HepG2 (cell line): ENCODE measurements at regions of chr12 and their contacts with region 1.

Region 1: DNA sequence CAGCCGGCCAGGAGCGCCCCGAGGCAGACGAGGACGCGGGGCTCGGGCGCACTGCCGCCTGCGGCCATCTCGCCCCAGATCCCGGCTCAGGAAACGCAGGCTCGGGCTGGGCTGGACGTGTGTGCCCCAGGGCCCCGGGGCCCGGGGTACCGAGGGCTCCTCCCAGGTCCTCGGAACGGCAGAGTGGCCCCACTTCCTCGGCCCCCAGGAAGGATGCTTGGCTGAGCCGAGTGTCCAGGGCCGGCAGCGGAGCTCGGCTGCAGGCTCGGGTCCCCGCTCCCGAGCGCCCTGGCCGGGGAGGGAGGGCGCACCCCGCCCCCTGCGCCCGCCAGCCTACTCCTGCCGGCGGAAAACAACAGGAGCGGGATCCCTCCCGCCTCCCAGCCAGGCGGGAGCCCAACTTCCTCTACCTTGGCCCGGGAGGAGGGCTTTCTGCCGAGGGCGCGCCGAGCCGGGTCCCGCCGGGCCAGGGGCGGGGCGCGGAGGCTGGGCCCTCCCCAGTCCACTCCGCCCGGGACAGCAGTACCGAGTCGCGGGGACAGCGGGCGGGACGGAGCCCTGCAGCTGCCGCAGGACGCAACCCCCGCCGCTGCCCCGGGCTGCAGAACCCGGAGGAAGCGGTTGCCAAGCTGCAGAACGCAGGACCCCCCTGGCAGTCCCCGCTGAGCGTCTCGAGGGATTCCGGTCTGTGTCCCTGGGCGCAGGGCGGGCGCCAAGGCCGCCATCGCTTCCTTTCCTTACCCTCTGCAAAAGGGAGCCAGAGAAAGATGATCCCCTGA is at the start of gene VSIG10:
- DNase-seq: peak; percentile 71
- ATAC-seq: peak; percentile 91
- H3K4me3 ChIP-seq: peak within 1 kb of the TSS; percentile 82 to 91 (median 85)
- H3K27ac ChIP-seq: peak within 1 kb of the TSS; percentile 79
- H3K4me1 ChIP-seq: peaks cover 41% of the 10 kb centered on the region
- H3K27me3 ChIP-seq: no peaks in the 10 kb centered on the region
- CTCF ChIP-seq: no peak; the same call in 1 of the 2 replicates
- EP300 ChIP-seq: no peak; a peak in 1 of 4 replicates
- POLR2A ChIP-seq: peak; percentile 46 to 73
- RAD21 ChIP-seq: peak; percentile 46; the same call in 1 of the 2 replicates
- total RNA-seq, gene VSIG10: 35.6 and 42.5 TPM in 2 replicates

Region 2: GRCh38 chr12:118061011-118061875 is 42.5 kb before region 1 on chr12 and contains the start of gene WSB2:
- CTCF ChIA-PET with region 1: no interaction called
- POLR2A ChIA-PET with region 1: interaction called, 7 read pairs
- in situ Hi-C with region 1: no loop called
- intact Hi-C with region 1: loop called (anchors 1 kb)
- DNase-seq: no peak
- ATAC-seq: peak; percentile 23
- H3K4me3 ChIP-seq: peak within 1 kb of the TSS; percentile 69 to 92 (median 86)
- H3K27ac ChIP-seq: peak within 1 kb of the TSS; percentile 81
- H3K4me1 ChIP-seq: peaks cover 62% of the 10 kb centered on the region
- H3K27me3 ChIP-seq: no peaks in the 10 kb centered on the region; a peak in 1 of 5 replicates
- CTCF ChIP-seq: no peak
- EP300 ChIP-seq: no peak
- POLR2A ChIP-seq: no peak
- RAD21 ChIP-seq: no peak
- total RNA-seq, gene WSB2: 31.0 and 39.5 TPM in 2 replicates

Region 3: GRCh38 chr12:118259079-118259478 is 155.3 kb after region 1 on chr12:
- CTCF ChIA-PET with region 1: no interaction called
- POLR2A ChIA-PET with region 1: no interaction called
- in situ Hi-C with region 1: no loop called
- intact Hi-C with region 1: no loop called
- DNase-seq: no peak
- ATAC-seq: no peak
- H3K4me3 ChIP-seq: no peak overlapping the region
- H3K27ac ChIP-seq: no peak overlapping the region
- H3K4me1 ChIP-seq: no peaks in the 10 kb centered on the region
- H3K27me3 ChIP-seq: no peaks in the 10 kb centered on the region; a peak in 1 of 5 replicates
- CTCF ChIP-seq: no peak
- EP300 ChIP-seq: no peak
- POLR2A ChIP-seq: no peak
- RAD21 ChIP-seq: no peak